ENCODE measurements at regions of chrX and their contacts with region 1.

Region 1: DNA sequence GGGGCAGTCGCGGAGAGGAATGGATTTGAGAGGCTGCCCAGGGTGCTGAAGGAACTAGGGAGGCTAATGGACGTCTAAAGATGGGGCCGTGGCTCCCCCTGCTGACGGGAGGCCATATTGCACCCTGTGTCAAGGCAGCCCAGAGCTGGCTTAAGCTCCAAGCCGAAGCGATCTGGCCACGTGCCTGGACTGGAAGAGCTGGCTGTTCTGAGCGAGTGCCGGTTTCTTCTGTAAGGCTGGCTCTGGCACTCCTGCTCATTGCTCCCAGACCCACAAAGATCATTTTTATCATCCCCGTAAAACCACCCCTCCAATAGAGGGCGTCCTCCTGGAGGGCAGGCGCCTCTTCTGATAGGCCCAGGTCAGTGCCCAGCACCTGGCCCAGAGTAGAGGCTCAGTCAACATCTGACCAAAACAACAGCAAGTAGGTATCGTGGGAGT is 5.6 kb downstream of the PNCK start:
- H3K4me3 ChIP-seq: no peak overlapping the region
- H3K27ac ChIP-seq: no peak overlapping the region
- H3K4me1 ChIP-seq: no peaks in the 10 kb centered on the region
- CTCF ChIP-seq: peak; percentile 91

Region 2: DNA sequence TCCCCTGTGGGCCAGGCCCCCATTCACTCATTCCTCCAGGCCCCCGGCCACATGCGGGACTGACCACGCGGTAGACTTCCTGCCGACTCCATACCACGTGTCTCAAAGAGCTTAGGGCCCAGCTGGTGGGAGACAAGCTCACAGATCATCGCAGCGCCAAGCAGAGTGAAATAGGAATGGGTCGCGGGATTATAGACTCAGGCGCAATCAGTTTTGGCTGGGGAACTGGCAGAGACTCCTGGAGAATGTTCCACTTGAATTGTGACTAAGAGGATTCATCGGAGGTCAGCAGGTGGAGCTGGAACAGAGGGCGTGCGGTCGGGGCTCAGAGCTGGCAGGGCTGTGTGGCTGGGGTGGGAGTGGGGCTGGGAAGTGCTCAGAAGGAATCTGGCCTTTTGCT is 134.9 kb before region 1 on chrX:
- CTCF ChIA-PET with region 1: interaction called, 63 read pairs
- POLR2A ChIA-PET with region 1: no interaction called
- H3K4me3 ChIP-seq: no peak overlapping the region
- H3K27ac ChIP-seq: no peak overlapping the region
- H3K4me1 ChIP-seq: no peaks in the 10 kb centered on the region
- CTCF ChIP-seq: no peak

Region 3: GRCh38 chrX:153547195-153547594 is 120.8 kb before region 1 on chrX:
- CTCF ChIA-PET with region 1: interaction called, 11 read pairs
- POLR2A ChIA-PET with region 1: no interaction called
- H3K4me3 ChIP-seq: no peak overlapping the region
- H3K27ac ChIP-seq: no peak overlapping the region
- H3K4me1 ChIP-seq: no peaks in the 10 kb centered on the region
- CTCF ChIP-seq: no peak

Region 4: DNA sequence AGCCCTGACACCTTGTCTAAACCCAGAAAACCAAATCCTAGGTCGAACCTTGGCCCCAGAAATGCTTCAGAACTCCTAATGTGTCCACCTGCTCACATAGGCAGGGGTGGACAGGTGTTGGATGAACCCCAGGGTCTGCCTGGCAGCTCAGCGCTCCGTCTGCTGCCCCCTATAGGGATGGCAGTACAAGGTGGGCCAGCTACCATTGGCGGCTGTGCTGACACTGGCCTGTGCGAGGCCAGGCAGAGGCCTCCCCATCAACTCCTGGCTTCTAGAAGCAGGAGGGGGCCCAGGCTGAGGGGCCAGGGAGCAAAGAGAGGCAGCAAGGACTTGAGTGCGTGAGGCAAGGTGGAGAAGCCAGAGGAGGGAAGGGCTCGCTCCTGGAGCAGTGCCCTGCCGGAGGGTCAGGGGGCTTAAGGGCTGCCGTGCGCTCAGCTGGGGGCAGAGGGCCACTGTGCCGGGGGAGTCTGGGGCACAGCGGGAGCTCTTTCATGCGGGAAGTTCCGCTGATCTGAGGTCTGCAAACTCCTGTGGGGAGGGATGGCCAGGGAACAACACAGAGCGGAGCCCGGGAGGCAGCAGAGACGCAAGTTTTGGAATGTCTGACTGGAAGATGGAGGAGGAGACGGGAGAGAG is 89.7 kb before region 1 on chrX:
- CTCF ChIA-PET with region 1: interaction called, 16 read pairs
- POLR2A ChIA-PET with region 1: no interaction called
- H3K4me3 ChIP-seq: no peak overlapping the region
- H3K27ac ChIP-seq: no peak overlapping the region
- H3K4me1 ChIP-seq: no peaks in the 10 kb centered on the region
- CTCF ChIP-seq: no peak

Region 5: DNA sequence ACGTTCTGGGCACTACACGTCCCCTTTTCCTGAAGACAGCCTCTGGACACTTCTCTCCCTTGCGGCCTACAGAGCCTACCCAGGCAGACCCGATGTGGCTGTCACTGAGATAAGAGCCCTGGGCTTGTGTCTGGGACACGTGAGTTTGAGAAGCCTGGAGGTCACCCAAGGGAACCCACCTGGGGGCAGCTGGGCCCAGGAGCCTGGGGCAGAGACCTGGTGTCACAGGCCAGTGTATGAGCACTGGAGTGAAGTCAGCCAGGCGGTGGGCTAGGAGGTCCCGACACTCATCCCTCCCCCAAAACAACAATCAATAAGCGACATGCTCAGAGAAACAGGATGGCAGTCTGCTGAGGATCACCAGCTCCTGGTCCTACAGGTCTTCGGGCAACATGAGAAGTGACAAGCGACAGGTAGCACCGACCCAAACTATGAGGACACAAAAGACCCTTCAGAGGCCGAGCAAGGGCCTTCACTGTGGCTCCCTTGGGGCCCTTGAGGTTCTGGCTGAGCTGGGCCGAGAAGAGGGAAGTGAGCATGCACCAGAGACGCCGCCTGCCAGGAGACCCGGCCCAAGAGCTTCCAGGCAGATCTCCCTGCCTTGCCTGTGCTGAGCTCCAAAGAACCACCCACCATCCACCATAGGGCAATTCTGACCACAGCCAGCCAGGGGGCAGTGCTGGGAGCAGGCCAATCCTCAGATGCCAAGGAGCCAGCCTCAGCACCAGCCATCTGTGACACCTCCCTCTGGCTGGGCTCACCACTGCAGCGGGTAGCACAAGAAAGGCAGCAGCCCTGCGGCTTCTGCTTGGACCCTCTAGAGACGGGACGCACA is 32.0 kb before region 1 on chrX:
- CTCF ChIA-PET with region 1: interaction called, 21 read pairs
- POLR2A ChIA-PET with region 1: no interaction called
- H3K4me3 ChIP-seq: no peak overlapping the region
- H3K27ac ChIP-seq: no peak overlapping the region
- H3K4me1 ChIP-seq: no peaks in the 10 kb centered on the region
- CTCF ChIP-seq: peak; percentile 73

Region 6: DNA sequence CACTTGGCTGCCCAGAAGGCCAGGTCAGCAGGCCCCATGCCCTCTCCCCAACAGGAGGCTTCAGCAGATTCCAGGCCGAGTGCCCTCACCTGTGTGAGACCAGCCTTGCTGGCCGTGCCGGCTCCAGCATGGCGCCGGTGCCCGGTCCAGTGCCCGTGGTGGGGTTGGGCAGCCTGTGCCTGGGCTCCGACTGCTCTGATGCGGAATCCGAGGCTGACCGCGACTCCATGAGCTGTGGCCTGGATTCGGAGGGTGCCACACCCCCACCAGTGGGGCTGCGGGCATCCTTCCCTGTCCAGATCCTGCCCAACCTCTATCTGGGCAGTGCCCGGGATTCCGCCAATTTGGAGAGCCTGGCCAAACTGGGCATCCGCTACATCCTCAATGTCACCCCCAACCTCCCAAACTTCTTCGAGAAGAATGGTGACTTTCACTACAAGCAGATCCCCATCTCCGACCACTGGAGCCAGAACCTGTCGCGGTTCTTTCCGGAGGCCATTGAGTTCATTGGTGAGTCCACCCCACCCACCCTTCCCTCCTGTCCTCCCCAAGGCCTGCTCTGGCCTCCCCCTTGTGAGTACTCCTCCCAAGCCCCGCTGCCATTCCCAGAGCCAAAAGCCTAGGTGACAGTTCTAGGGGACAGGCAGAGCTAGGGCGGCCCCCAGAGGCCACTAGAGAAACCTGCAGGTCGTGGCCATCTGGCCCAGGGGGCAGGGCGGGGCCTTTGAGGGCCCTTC is 18.6 kb before region 1 on chrX:
- CTCF ChIA-PET with region 1: interaction called, 39 read pairs
- POLR2A ChIA-PET with region 1: no interaction called
- H3K4me3 ChIP-seq: no peak overlapping the region
- H3K27ac ChIP-seq: no peak overlapping the region
- H3K4me1 ChIP-seq: no peaks in the 10 kb centered on the region
- CTCF ChIP-seq: no peak

Region 7: DNA sequence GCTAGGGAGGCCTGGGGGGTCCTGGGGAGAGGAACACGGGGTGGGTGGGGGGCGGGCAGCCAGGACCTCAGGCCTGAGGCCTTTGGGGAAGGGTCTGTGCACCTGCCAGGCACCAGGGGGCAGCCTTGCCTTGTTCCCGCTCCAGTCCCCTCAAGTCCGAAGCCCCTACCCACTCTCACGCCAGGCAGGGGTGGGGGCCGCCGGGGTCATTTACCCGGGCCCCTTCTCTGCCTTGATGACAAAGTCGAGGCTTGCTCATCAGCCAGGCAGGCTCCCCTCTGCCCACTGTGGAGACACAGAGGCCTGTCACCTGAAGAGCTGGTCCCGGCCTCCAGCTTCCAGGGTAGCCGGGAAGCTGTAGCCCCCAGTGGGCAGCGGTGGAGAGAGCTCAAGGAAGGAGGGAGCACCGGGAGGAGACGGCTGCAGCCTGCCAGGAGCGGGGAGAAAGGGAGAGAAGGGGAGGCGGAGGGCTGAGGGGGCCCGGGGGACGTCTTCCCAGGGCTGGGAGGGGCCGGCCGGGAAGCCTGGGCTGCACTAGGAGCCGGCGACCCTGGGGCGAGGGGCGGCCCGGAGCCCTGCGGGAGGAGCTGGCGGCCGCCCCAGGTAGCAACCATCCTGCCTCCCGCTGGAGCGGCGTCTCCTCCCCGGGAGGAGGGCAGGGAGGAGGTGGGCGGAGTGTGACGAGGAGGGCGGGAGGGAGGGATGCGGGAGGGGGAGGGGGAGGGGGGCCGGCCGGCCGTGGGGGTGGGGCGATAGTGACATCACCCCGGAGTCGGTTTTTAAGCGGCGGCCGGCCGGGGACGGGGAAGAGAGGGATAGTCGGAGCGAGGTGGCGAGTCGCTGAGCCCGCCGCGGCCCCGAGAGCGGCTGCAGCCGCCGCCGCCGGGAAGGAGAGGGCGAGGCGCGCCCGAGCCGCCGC is 19.4 kb after region 1 on chrX and contains the start of gene SLC6A8:
- CTCF ChIA-PET with region 1: interaction called, 39 read pairs
- POLR2A ChIA-PET with region 1: interaction called, 3 read pairs
- H3K4me3 ChIP-seq: peak within 1 kb of the TSS; percentile 57
- H3K27ac ChIP-seq: peak within 1 kb of the TSS; percentile 73; the same call in 1 of the 2 replicates
- H3K4me1 ChIP-seq: no peaks in the 10 kb centered on the region
- CTCF ChIP-seq: no peak; the same call in 1 of the 2 replicates

Region 8: GRCh38 chrX:153800177-153800722 is 132.3 kb after region 1 on chrX:
- CTCF ChIA-PET with region 1: no interaction called
- POLR2A ChIA-PET with region 1: no interaction called
- H3K4me3 ChIP-seq: no peak overlapping the region
- H3K27ac ChIP-seq: no peak overlapping the region
- H3K4me1 ChIP-seq: no peaks in the 10 kb centered on the region
- CTCF ChIP-seq: no peak

Measured in HEK293 (cell line).